ENCODE measurements at regions of chr7 and their contacts with region 1.

Region 1: DNA sequence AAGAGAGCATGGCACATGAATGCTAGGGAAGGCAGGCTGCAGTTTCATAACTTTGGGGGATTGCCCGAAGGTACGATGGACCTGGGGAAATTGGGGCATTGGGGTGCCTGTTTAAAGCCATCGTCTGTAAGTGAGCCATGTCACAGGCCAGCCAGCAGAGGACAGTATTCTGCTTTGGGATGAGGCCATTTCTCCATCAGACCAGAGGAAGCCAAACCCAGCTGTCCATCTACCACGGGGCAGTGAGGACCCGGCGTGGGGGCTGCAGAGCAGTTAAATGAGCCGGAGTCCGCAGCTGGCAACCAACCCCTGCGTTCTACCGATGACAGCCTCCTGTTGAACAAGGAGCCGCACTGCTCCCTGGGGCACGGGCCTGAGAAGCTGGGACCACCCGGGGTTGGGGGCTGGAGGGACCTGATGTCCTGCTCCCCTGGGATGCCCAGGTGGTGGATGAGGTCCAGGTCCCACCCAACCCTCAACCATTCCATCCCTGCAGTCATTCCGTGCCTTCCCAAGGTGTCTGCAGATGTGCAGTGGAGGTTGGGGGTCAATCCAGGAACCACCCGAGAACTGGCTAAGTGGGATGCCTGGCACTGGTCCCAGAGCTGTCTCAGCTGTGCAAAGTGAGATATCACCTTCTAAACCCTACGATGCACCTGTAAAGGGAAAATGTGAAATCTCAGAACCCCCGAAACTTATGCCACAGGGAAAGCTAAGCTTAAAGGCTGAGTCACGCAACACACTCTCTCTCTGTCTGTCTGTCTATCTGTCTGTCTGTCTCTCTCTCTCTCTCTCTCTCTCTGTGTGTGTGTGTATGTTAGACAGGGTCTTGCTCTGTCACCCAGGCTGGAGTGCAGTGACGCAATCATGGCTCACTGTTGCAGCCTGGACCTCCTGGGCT is 12.1 kb upstream of the RHBDD2 start:
- DNase-seq: peak; percentile 77 to 86
- ATAC-seq: peak; percentile 98
- H3K4me3 ChIP-seq: no peak overlapping the region
- H3K27ac ChIP-seq: peak overlapping the region; percentile 47 to 78
- H3K4me1 ChIP-seq: peaks cover 14% of the 10 kb centered on the region
- CTCF ChIP-seq: peak; percentile 92
- EP300 ChIP-seq: no peak
- POLR2A ChIP-seq: no peak
- RAD21 ChIP-seq: peak; percentile 92 to 98

Region 2: DNA sequence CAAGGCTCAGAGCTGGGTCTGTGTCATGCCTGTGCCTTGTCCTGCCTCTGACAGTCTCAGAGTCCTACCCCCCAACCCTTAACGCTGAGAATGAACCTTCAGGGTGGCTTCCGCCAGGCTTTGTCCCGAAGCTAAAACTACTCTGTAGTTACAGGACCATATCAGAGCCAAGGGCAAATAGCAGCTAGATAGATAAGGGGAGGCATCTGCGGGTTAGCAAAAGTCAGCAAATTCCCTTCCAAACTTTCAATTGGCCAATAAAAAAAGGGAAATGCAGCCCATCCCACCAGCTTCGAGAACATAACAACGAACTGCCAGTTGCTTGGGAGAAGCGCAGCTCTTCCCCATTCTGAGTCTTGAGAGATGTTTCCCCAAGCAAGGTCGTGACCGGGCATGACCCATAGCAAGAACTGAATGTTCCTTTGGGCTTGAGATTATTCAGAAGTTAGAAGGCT is 70.9 kb before region 1 on chr7:
- CTCF ChIA-PET with region 1: no interaction called
- POLR2A ChIA-PET with region 1: no interaction called
- DNase-seq: no peak
- ATAC-seq: no peak
- H3K4me3 ChIP-seq: no peak overlapping the region
- H3K27ac ChIP-seq: no peak overlapping the region
- H3K4me1 ChIP-seq: peaks cover 11% of the 10 kb centered on the region
- CTCF ChIP-seq: no peak
- EP300 ChIP-seq: no peak
- POLR2A ChIP-seq: no peak
- RAD21 ChIP-seq: no peak

Region 3: GRCh38 chr7:75854233-75854632 is 12.5 kb before region 1 on chr7:
- CTCF ChIA-PET with region 1: interaction called, 13 read pairs
- POLR2A ChIA-PET with region 1: no interaction called
- DNase-seq: no peak
- ATAC-seq: peak in 1 of 2 experiments; percentile 23; a peak in 2 of 6 replicates
- H3K4me3 ChIP-seq: no peak overlapping the region
- H3K27ac ChIP-seq: no peak overlapping the region
- H3K4me1 ChIP-seq: no peaks in the 10 kb centered on the region
- CTCF ChIP-seq: no peak
- EP300 ChIP-seq: no peak
- POLR2A ChIP-seq: no peak
- RAD21 ChIP-seq: no peak

Region 4: GRCh38 chr7:75878769-75879611 is 12.3 kb after region 1 on chr7 and contains the start of gene RHBDD2:
- CTCF ChIA-PET with region 1: interaction called, 20 read pairs
- POLR2A ChIA-PET with region 1: no interaction called
- DNase-seq: peak; percentile 92 to 95
- ATAC-seq: peak; percentile 94 to 97
- H3K4me3 ChIP-seq: peak within 1 kb of the TSS; percentile 77
- H3K27ac ChIP-seq: peak within 1 kb of the TSS; percentile 93
- H3K4me1 ChIP-seq: peaks cover 14% of the 10 kb centered on the region
- CTCF ChIP-seq: no peak
- EP300 ChIP-seq: no peak
- POLR2A ChIP-seq: peak; percentile 98
- RAD21 ChIP-seq: peak in 1 of 2 experiments; percentile 40; a peak in 2 of 5 replicates
- polyA plus RNA-seq, gene RHBDD2: 61.3 and 65.2 TPM in 2 replicates

Region 5: GRCh38 chr7:75969182-75969581 is 102.4 kb after region 1 on chr7:
- CTCF ChIA-PET with region 1: interaction called, 12 read pairs
- POLR2A ChIA-PET with region 1: no interaction called
- DNase-seq: no peak
- ATAC-seq: no peak
- H3K4me3 ChIP-seq: no peak overlapping the region
- H3K27ac ChIP-seq: 0 out of 6 replicates have a peak overlapping the region, but pooled peaks of 1 of the 2 experiments have one; percentile 10
- H3K4me1 ChIP-seq: peaks cover 7% of the 10 kb centered on the region; the same call in 1 of the 3 replicates
- CTCF ChIP-seq: no peak
- EP300 ChIP-seq: no peak
- POLR2A ChIP-seq: no peak
- RAD21 ChIP-seq: no peak

Region 6: DNA sequence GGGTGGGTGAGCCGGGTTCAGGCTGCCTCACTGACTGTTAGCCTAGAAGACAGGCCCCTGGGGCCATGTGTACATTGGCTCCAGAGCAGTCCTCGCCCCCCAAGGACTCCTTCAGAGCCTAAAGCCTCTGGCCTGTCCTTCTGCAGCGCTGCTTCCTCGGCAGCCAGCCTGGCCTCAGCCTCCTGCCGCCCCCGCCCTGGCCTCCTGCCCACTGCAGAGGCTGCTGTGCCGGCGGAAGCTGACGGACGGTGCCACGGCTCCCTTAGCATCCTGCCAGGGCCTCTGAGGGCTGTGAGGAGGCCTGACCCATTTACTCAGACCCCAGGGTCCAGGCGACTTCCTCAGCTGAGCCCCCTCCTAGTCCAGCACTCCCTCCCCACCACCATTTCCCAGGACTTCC is 339.9 kb after region 1 on chr7:
- CTCF ChIA-PET with region 1: no interaction called
- POLR2A ChIA-PET with region 1: no interaction called
- DNase-seq: no peak
- ATAC-seq: no peak
- H3K4me3 ChIP-seq: no peak overlapping the region
- H3K27ac ChIP-seq: no peak overlapping the region
- H3K4me1 ChIP-seq: no peaks in the 10 kb centered on the region
- CTCF ChIP-seq: no peak
- EP300 ChIP-seq: no peak
- POLR2A ChIP-seq: no peak
- RAD21 ChIP-seq: no peak

Measured in A549 (cell line).